ENCODE measurements at regions of chr6 and their contacts with region 1.

Region 1: DNA sequence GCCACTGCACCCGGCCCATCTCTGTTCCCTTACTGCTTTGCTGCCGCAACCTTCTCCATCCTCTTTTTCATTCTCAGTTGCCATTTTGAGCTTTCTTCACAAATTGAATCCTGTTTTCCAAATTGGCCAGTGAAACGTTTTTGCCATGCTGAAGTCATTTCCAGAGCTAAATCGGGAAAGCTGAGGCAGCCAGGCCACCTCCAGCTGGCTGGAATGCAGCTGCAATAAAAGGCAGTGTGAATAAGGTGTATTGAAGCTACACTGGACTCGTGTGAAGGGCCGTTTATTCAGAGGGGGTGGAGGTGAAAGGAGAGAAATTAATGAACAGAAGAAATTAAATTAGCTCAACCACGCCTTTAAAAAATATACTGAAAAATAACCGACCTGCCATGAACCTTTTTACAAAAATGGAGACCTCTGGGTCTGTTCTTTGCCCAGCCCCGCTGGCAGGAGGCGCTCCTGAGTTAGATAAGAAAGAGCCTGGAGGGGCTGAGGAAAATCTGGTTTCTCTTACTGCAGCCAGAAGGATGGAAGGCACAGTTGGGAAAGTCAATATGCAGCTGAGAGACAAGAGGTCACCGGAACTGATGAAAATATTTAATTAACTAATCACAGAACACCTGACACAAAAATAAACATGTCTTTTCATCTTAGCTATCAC is 283.9 kb downstream of the FOXC1 start:
- DNase-seq: no peak
- H3K4me3 ChIP-seq: no peak overlapping the region
- H3K27ac ChIP-seq: no peak overlapping the region
- H3K4me1 ChIP-seq: no peaks in the 10 kb centered on the region
- H3K27me3 ChIP-seq: no peaks in the 10 kb centered on the region

Region 2: DNA sequence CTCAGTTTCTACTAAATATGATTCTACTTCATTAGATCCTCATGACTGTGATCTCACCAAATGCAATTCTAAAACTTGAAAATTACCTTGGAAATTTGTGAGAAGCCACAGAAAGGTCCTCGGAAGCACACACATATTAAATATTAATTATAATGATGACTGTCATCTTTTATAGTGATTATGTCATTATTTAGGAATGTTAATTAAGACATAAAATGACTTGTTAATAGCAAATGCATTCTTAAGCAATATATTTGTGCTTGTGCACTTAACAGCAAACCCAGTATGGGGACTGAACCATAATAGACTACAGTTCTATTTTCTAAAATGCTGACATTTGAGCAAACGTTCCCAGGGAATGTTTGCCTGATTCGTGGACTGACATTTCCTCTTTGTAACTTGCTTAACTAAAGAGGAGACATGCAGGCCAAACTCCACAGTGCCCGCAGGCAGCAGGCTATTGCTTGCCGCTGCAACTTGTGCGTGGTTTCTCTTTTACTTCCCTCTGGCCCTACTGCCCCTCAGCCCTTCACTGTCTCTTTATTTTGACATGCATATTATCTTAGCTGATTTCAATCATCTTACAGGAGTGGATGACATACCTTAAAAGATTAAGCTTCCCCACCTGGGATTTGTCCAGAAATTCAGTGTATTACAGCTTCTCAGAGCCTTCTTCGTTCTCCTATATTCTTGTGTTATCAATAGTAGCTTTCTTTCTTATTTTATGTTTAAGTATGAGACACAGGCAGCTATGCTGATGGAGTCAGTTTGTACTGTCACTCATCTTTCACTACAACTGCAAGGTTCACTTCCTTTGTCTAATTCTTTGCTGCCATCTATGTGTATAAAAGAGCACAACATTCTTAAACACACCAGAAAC is 210.3 kb after region 1 on chr6:
- CTCF ChIA-PET with region 1: interaction called, 19 read pairs
- POLR2A ChIA-PET with region 1: no interaction called
- DNase-seq: peak; percentile 45 to 75 (median 73)
- H3K4me3 ChIP-seq: no peak overlapping the region
- H3K27ac ChIP-seq: no peak overlapping the region
- H3K4me1 ChIP-seq: peaks cover 0 to 7% (median 2%) of the 10 kb centered on the region in 4 experiments
- H3K27me3 ChIP-seq: no peaks in the 10 kb centered on the region